ENCODE measurements at regions of chr1 and their contacts with region 1.

Region 1: DNA sequence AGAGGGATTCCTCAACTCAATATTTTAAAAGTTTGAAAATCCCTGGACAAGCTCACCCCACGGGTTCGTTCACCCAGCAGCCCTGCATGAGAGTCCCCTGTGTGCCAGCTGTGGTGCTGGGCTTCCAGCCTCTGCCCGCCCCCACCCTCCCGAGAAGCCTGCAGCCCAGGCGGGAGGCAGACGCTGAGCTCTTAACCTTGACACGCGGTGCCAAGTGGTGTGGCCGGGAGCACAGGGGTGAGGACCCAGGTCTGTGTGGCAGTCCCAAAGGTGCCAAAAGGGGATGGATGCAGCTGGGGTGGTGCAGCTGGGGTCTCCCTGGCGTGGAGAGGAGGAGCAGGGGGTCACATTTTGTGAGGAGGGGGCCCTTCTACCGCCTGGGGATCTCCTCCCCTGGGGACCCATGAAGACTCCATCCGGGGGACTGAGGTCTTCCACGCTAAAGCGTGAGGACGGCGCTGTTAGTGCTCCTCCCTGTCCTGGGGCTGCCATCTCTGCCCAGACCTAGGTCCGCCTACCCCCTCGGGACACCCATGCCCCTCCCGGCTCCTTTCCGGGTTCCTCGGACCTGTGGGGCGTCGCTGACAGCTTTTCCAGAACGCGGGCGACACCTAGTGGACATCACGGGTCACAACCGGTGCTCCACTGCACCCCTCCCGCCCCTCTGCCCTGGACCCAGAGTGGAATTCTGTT is 12.9 kb downstream of the PLA2G2F start:
- DNase-seq: peak; percentile 50
- H3K4me3 ChIP-seq: peak overlapping the region; percentile 25 to 57 (median 35)
- H3K27ac ChIP-seq: no peak overlapping the region
- H3K4me1 ChIP-seq: peaks cover 6% of the 10 kb centered on the region
- H3K27me3 ChIP-seq: no peaks in the 10 kb centered on the region
- CTCF ChIP-seq: peak; percentile 79 to 89

Region 2: GRCh38 chr1:19882111-19883071 is 269.7 kb before region 1 on chr1 and contains the start of gene OTUD3:
- CTCF ChIA-PET with region 1: no interaction called
- dilution Hi-C with region 1: no loop called
- in situ Hi-C with region 1: no loop called
- intact Hi-C with region 1: loop called (anchors 1 kb)
- DNase-seq: peak; percentile 94
- H3K4me3 ChIP-seq: peak within 1 kb of the TSS; percentile 72 to 85 (median 74)
- H3K27ac ChIP-seq: peak within 1 kb of the TSS; percentile 66
- H3K4me1 ChIP-seq: peaks cover 37% of the 10 kb centered on the region
- H3K27me3 ChIP-seq: no peaks in the 10 kb centered on the region
- CTCF ChIP-seq: peak; percentile 79 to 90
- total RNA-seq, gene OTUD3: 3.3 to 11.5 TPM

Region 3: DNA sequence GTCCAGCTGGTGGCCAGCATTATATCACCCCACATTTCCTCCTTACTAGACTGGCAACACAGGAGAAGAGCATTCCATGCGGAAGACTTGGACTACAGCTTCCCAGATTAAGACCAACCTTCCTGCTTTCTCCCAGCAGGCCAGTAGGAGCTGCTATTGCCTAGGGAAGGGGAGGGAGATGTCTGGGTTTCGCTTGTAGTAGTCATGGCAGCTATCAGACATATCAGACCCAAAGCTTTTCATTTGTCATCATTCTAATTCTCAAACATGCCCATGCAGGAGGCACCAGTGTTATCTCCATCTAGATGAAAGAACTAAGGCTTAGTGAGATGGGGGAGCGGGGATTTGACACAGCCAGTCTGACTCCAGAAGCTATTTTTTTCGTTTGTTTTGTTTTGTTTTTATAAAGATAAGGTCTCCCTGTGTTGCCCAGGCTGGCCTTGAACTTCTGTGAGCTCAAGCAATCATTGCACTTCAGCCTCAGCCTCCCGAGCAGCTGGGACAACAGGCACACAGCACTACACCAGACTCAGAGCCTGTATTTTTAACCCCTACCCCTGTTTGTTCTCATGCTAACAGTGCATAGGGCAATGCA is 177.1 kb before region 1 on chr1:
- CTCF ChIA-PET with region 1: interaction called, 7 read pairs
- dilution Hi-C with region 1: loop called (anchors 5 kb)
- in situ Hi-C with region 1: no loop called
- intact Hi-C with region 1: loop called (anchors 1 kb)
- DNase-seq: peak; percentile 86
- H3K4me3 ChIP-seq: no peak overlapping the region
- H3K27ac ChIP-seq: no peak overlapping the region
- H3K4me1 ChIP-seq: peaks cover 6% of the 10 kb centered on the region
- H3K27me3 ChIP-seq: no peaks in the 10 kb centered on the region
- CTCF ChIP-seq: peak; percentile 100

Region 4: DNA sequence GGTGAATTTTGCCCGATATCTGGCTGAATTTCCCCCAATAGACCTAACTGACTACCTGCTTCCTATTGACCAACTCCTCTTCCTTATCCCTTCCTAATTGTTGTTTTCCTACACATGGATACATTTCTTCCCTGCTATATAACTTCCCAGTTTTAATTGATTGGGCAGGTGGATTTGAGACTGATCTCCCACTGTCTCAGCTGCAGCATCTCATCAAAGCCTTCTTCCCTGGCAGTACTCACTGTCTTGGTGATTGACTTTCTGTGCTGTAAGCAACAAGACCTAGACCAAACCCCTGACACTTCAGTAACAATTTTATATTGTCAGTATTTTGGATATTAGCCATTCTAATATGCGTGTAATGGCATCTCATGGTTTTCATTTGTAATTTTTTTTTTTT is 161.4 kb before region 1 on chr1:
- CTCF ChIA-PET with region 1: no interaction called
- dilution Hi-C with region 1: no loop called
- in situ Hi-C with region 1: no loop called
- intact Hi-C with region 1: no loop called
- DNase-seq: no peak
- H3K4me3 ChIP-seq: no peak overlapping the region
- H3K27ac ChIP-seq: no peak overlapping the region
- H3K4me1 ChIP-seq: no peaks in the 10 kb centered on the region
- H3K27me3 ChIP-seq: peaks cover 7% of the 10 kb centered on the region
- CTCF ChIP-seq: no peak

Region 5: DNA sequence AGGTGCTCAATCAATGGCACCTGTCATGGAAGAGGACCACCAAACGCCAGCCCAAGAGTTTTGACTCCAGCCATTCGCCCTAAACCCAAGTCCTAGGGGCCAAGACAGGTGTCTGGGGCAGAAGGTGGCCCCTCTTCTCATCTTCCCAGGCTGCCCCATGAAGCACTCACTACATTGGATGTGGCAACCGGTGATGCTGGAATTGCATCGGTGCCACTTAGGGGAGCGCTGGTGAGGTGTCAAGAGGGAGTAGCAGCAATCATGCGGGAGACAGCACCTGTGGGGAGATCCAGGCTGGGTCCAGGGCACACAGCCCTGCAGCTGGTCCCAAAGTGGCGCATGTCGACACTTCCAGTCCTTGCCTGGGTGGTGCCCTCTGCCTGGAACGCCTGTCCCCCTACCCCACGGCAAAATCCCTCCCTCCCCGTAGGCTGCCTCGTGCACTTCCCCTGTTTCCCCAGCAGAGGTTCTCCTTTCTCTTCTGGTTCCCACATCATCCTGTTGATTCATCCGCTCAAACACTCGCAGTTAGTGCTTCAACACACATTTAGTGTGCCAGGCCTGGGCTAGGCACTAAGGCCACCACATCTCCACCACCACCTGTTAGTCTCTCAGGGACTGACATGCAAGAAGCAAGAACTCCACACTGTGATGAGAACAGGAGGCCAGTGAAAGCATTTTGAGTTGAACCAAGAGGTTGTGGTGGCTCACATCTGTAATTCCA is 51.3 kb before region 1 on chr1:
- CTCF ChIA-PET with region 1: interaction called, 3 read pairs
- dilution Hi-C with region 1: loop called (anchors 10 kb)
- in situ Hi-C with region 1: loop called (anchors 5 to 10 kb)
- intact Hi-C with region 1: loop called (anchors 1 kb)
- DNase-seq: peak; percentile 57
- H3K4me3 ChIP-seq: no peak overlapping the region
- H3K27ac ChIP-seq: no peak overlapping the region
- H3K4me1 ChIP-seq: peaks cover 12% of the 10 kb centered on the region
- H3K27me3 ChIP-seq: no peaks in the 10 kb centered on the region
- CTCF ChIP-seq: peak; percentile 86 to 93

Region 6: DNA sequence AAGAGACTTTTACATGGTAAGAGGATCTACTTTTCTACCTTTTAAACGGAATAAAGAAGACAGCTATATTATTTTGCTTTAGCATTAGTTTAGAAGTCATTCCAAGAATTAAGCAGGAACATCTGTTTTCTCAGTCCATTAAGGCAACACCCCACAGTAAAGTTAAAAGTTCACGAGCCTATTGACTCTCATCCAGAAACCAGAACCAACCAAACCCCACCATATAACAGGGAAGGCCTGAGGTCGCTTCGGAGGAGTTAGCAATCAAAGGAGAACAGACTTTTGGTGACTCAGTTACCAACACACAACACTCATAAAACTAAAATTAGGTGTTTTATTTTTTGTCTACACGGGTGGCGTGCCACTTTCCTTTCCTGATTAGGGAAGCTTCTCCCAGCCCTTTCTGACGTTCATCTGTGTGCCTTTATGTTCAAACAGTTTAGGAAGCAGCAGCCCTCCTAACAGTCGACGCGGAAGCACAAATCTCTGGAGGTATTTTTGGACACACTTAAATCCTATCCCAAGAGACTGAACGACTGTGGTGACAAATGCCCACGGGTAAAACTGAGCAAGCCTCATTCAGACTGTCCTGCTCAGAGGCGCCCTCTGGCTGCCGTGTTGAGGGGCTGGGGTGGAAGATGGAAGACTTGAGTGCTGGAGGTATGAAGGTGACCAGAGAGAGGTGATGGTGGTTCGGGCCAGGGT is 42.9 kb after region 1 on chr1:
- CTCF ChIA-PET with region 1: no interaction called
- dilution Hi-C with region 1: no loop called
- in situ Hi-C with region 1: no loop called
- intact Hi-C with region 1: loop called (anchors 5 kb)
- DNase-seq: peak; percentile 46
- H3K4me3 ChIP-seq: no peak overlapping the region
- H3K27ac ChIP-seq: peak overlapping the region; percentile 24
- H3K4me1 ChIP-seq: peaks cover 53% of the 10 kb centered on the region
- H3K27me3 ChIP-seq: no peaks in the 10 kb centered on the region
- CTCF ChIP-seq: peak; percentile 83 to 84

Measured in mammary epithelial cell (primary cell).